Ovary (tissue), 10 donors: ENCODE measurements at regions of chr10 and their contacts with region 1.

Region 1: GRCh38 chr10:122062831-122063674 is 74.1 kb downstream of the TACC2 start:
- DNase-seq: peak; percentile 77 to 89 (median 79)
- H3K4me3 ChIP-seq: no peak overlapping the region
- H3K27ac ChIP-seq: peak overlapping the region; percentile 67 to 68
- H3K4me1 ChIP-seq: peaks cover 2% of the 10 kb centered on the region
- H3K27me3 ChIP-seq: no peaks in the 10 kb centered on the region
- CTCF ChIP-seq: no peak
- EP300 ChIP-seq: peak; percentile 38
- POLR2A ChIP-seq: no peak

Region 2: DNA sequence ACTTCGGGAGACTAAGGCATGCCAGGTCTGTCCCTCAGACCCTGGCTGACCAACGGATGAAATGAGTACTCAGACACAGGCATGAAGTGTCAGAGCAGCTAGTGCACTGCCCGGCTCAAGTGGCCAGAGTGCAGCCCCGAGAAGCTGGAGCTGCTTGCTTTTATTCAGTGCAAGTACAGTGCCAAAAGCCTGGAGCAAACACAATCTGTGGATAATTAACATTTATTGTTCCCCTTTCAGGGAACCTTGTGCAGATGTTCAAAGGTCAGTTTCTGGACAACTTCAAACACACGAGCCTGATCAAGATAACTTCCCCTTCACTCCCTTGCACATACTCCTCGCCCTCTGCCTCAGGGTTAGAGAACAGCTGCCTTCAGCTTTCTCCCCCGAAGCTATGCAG is 127.4 kb before region 1 on chr10:
- intact Hi-C with region 1: loop called in 1 of 4 experiments (anchors 10 kb)
- DNase-seq: no peak
- H3K4me3 ChIP-seq: no peak overlapping the region
- H3K27ac ChIP-seq: no peak overlapping the region
- H3K4me1 ChIP-seq: no peaks in the 10 kb centered on the region
- H3K27me3 ChIP-seq: peaks cover 4% of the 10 kb centered on the region
- CTCF ChIP-seq: no peak
- EP300 ChIP-seq: no peak
- POLR2A ChIP-seq: no peak